ENCODE measurements at regions of chr1 and their contacts with region 1.

Region 1: GRCh38 chr1:23422241-23423030 is 2.1 kb downstream of the TCEA3 start:
- DNase-seq: peak; percentile 69
- H3K4me3 Mint-ChIP-seq: no peak overlapping the region
- H3K27ac Mint-ChIP-seq: peak overlapping the region; percentile 36
- H3K4me1 Mint-ChIP-seq: peaks cover 24% of the 10 kb centered on the region
- H3K27me3 Mint-ChIP-seq: peaks cover 5% of the 10 kb centered on the region

Region 2: GRCh38 chr1:22731924-22732720 is 690.3 kb before region 1 on chr1:
- CTCF ChIA-PET with region 1: no interaction called
- POLR2A ChIA-PET with region 1: no interaction called
- intact Hi-C with region 1: no loop called
- DNase-seq: no peak
- H3K4me3 Mint-ChIP-seq: no peak overlapping the region
- H3K27ac Mint-ChIP-seq: no peak overlapping the region
- H3K4me1 Mint-ChIP-seq: no peaks in the 10 kb centered on the region
- H3K27me3 Mint-ChIP-seq: no peaks in the 10 kb centered on the region

Region 3: GRCh38 chr1:23403735-23404486 is 18.5 kb before region 1 on chr1:
- CTCF ChIA-PET with region 1: interaction called, 13 read pairs
- POLR2A ChIA-PET with region 1: no interaction called
- intact Hi-C with region 1: no loop called
- DNase-seq: peak; percentile 93
- H3K4me3 Mint-ChIP-seq: no peak overlapping the region
- H3K27ac Mint-ChIP-seq: no peak overlapping the region
- H3K4me1 Mint-ChIP-seq: peaks cover 9% of the 10 kb centered on the region
- H3K27me3 Mint-ChIP-seq: no peaks in the 10 kb centered on the region

Region 4: DNA sequence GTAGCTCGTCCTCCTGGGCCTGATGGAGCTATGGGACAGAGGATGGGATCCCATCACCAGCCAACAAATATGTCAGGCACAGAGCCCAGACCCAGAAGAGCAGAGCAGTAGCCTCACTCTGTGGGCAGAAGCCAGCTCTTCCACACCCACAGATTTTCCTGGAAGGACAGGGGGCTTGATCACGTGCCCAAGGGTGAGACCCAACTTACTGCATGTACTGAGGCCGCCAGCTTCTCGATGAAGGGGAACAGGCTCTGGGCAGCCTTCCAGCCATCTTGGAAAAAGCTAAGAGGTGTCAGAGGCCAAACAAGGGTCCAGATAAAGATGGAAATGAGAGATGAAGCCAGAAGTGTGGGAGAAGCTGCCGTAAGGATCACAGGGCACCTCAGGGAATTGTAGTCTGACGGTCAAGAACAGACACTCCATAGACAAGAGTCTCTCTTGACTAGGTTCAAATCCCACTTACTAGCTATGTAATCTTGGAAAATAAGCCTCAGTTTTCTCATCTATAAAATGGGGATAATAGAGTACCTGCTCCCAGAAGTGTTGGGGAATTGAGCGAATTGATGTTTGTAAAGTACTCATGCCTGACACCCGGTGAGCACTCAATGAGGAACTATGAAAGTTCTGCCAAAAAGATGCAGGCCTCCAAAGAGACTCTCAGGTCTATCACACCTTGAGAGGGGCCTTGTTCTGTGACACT is 19.2 kb after region 1 on chr1:
- CTCF ChIA-PET with region 1: no interaction called
- POLR2A ChIA-PET with region 1: no interaction called
- intact Hi-C with region 1: no loop called
- DNase-seq: no peak
- H3K4me3 Mint-ChIP-seq: no peak overlapping the region
- H3K27ac Mint-ChIP-seq: no peak overlapping the region
- H3K4me1 Mint-ChIP-seq: no peaks in the 10 kb centered on the region
- H3K27me3 Mint-ChIP-seq: no peaks in the 10 kb centered on the region

Region 5: GRCh38 chr1:23530747-23531561 is 108.5 kb after region 1 on chr1 and contains the start of gene E2F2:
- CTCF ChIA-PET with region 1: no interaction called
- POLR2A ChIA-PET with region 1: no interaction called
- intact Hi-C with region 1: loop called (anchors 5 kb)
- DNase-seq: peak; percentile 89
- H3K4me3 Mint-ChIP-seq: peak within 1 kb of the TSS; percentile 88
- H3K27ac Mint-ChIP-seq: peak within 1 kb of the TSS; percentile 91
- H3K4me1 Mint-ChIP-seq: peaks cover 75% of the 10 kb centered on the region
- H3K27me3 Mint-ChIP-seq: no peaks in the 10 kb centered on the region
- total RNA-seq, gene E2F2: 22.1 to 26.3 TPM

Measured in activated CD4-positive, alpha-beta memory T cell treated with anti-CD3 and anti-CD28 coated beads for 36 hours (primary cell).